Activated CD4-positive, alpha-beta memory T cell treated with anti-CD3 and anti-CD28 coated beads for 36 hours (primary cell): ENCODE measurements at regions of chr4 and their contacts with region 1.

Region 1: GRCh38 chr4:145618932-145619638 is at the start of gene MMAA:
- DNase-seq: peak; percentile 97
- H3K4me3 Mint-ChIP-seq: peak within 1 kb of the TSS; percentile 94
- H3K27ac Mint-ChIP-seq: peak within 1 kb of the TSS; percentile 100
- H3K4me1 Mint-ChIP-seq: peaks cover 46% of the 10 kb centered on the region
- H3K27me3 Mint-ChIP-seq: no peaks in the 10 kb centered on the region
- total RNA-seq, gene MMAA: 24.4 to 25.1 TPM

Region 2: DNA sequence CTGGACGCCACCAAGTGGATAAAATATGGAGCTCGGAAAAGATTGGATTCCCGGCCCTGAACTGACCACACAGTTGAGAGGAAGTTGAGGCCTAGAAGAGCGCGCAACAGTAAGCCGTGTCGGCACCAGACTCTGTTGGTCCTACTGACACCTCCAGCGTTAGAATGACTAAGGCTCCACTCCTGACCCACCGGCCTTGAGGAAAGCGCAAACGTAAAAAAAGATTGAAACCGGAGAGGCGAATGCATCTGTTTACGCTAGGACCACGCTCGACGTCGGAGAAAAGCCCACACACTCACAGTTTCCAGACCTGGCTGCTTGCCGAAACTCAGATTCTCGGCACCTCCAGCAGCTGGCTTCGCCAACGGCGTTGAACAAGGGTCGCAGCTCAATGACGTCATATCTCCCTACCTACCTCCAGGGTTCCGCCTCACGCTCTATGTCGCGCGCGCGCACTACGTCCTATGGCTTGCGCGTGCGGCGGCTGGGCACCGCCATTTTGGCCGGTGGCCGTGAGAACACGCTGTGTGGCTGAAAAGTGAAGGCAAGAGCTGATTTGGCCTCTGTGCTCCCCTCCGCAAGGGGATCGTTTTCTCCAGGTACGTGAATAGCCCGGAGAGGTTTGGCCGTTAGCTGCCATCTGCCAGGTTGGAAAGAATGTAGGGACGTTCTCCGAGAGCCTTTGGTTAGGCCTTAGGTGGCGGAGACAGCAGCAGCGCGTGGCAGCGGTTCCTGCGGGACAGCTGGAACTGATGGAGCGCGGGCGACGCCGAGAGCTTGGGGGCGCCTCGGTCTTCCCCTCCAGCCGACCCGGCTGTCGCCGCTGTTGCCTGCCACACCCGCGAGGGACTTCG is 521.0 kb before region 1 on chr4 and contains the starts of genes ABCE1 and ANAPC10:
- CTCF ChIA-PET with region 1: interaction called, 3 read pairs
- POLR2A ChIA-PET with region 1: interaction called, 3 read pairs
- intact Hi-C with region 1: loop called (anchors 1 kb)
- DNase-seq: peak; percentile 97
- H3K4me3 Mint-ChIP-seq: peak within 1 kb of the TSS; percentile 87
- H3K27ac Mint-ChIP-seq: peak within 1 kb of the TSS; percentile 97
- H3K4me1 Mint-ChIP-seq: peaks cover 20% of the 10 kb centered on the region
- H3K27me3 Mint-ChIP-seq: no peaks in the 10 kb centered on the region
- total RNA-seq, gene ABCE1: 138 to 145 TPM
- total RNA-seq, gene ANAPC10: 28.2 to 28.3 TPM

Region 3: GRCh38 chr4:145234091-145234706 is 384.9 kb before region 1 on chr4:
- CTCF ChIA-PET with region 1: interaction called, 21 read pairs
- POLR2A ChIA-PET with region 1: no interaction called
- intact Hi-C with region 1: loop called (anchors 2 kb)
- DNase-seq: peak; percentile 65
- H3K4me3 Mint-ChIP-seq: no peak overlapping the region
- H3K27ac Mint-ChIP-seq: no peak overlapping the region
- H3K4me1 Mint-ChIP-seq: no peaks in the 10 kb centered on the region
- H3K27me3 Mint-ChIP-seq: no peaks in the 10 kb centered on the region

Region 4: GRCh38 chr4:145487631-145488030 is 131.5 kb before region 1 on chr4:
- CTCF ChIA-PET with region 1: no interaction called
- POLR2A ChIA-PET with region 1: no interaction called
- intact Hi-C with region 1: loop called (anchors 1 kb)
- DNase-seq: peak; percentile 44
- H3K4me3 Mint-ChIP-seq: no peak overlapping the region
- H3K27ac Mint-ChIP-seq: no peak overlapping the region
- H3K4me1 Mint-ChIP-seq: peaks cover 8% of the 10 kb centered on the region
- H3K27me3 Mint-ChIP-seq: peaks cover 19% of the 10 kb centered on the region

Region 5: DNA sequence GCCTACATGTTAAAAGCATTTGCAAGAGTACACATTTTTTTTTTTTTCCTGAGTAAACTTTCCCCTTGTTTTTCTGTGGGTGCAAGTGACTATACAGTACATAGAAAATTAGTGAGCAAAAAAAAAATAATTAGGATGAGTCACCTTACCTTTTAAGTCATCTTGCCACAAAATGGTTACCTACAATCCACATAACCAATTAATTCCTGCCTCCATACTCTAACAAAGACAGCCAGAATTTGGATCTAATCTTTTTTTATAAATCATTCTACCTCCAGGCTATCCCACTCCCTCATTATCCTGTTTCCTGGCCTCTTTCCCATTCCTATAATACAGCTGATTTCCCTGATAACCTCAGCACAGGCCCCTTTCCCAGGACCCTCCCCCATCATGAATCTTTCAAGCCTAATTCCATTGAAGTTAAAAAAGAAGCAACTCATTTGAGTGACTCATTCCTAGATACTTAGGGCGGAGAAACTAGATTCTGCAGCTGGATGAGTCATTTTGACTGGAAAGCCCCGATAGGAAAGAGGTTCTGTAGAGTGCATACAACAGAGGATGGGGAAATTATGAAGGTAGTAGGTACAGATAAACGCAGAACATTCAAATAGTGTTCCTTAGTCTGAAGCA is 189.1 kb after region 1 on chr4:
- CTCF ChIA-PET with region 1: interaction called, 4 read pairs
- POLR2A ChIA-PET with region 1: interaction called, 7 read pairs
- intact Hi-C with region 1: loop called (anchors 1 kb)
- DNase-seq: peak; percentile 60
- H3K4me3 Mint-ChIP-seq: peak overlapping the region; percentile 30
- H3K27ac Mint-ChIP-seq: peak overlapping the region; percentile 89
- H3K4me1 Mint-ChIP-seq: peaks cover 65% of the 10 kb centered on the region
- H3K27me3 Mint-ChIP-seq: no peaks in the 10 kb centered on the region

Region 6: GRCh38 chr4:145936142-145936996 is 317.3 kb after region 1 on chr4:
- CTCF ChIA-PET with region 1: interaction called, 4 read pairs
- POLR2A ChIA-PET with region 1: interaction called, 7 read pairs
- intact Hi-C with region 1: loop called (anchors 1 kb)
- DNase-seq: peak; percentile 72
- H3K4me3 Mint-ChIP-seq: peak overlapping the region; percentile 90
- H3K27ac Mint-ChIP-seq: peak overlapping the region; percentile 97
- H3K4me1 Mint-ChIP-seq: peaks cover 43% of the 10 kb centered on the region
- H3K27me3 Mint-ChIP-seq: peaks cover 1% of the 10 kb centered on the region

Region 7: DNA sequence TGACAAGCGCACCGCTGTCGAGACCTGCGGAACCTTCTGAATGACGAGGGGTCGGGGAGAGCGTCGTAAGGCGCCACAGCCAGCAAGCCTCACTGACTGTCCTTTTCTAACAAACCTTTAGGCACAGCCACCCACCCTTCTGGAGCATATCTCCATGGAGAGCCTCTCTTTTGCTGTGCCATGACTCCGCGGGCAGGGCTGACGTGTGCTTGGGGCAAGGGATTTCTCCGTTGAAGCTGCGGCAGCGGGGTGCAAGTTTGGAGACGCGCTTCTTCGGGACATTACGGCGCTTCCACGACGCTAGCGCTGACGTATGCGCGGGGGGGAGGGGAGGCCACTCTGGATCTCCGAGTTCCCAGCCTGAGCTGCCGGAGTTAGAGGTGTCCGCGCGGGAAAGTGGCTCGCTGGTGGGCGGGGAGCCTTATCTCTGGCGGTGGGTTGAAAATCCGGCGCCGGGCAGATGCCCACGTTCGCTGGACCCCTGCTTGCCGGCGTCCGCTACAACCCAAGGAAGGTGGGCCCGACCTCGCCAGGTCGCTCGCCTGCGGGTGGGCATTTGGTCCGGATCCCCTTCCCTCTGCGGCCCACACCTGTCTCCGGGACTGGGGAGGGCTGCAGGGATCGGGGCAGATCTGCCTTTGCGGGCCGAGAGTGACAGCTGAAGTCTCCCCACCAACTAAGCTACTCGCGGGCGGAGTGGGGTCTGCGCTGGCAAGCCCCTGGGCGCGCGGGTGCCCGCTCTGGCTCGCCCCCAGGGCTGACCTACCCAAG is 903.2 kb after region 1 on chr4:
- CTCF ChIA-PET with region 1: no interaction called
- POLR2A ChIA-PET with region 1: no interaction called
- intact Hi-C with region 1: loop called (anchors 5 kb)
- DNase-seq: peak; percentile 88
- H3K4me3 Mint-ChIP-seq: no peak overlapping the region
- H3K27ac Mint-ChIP-seq: peak overlapping the region; percentile 57
- H3K4me1 Mint-ChIP-seq: peaks cover 19% of the 10 kb centered on the region
- H3K27me3 Mint-ChIP-seq: no peaks in the 10 kb centered on the region